ENCODE measurements at regions of chr7 and their contacts with region 1.

Region 1: DNA sequence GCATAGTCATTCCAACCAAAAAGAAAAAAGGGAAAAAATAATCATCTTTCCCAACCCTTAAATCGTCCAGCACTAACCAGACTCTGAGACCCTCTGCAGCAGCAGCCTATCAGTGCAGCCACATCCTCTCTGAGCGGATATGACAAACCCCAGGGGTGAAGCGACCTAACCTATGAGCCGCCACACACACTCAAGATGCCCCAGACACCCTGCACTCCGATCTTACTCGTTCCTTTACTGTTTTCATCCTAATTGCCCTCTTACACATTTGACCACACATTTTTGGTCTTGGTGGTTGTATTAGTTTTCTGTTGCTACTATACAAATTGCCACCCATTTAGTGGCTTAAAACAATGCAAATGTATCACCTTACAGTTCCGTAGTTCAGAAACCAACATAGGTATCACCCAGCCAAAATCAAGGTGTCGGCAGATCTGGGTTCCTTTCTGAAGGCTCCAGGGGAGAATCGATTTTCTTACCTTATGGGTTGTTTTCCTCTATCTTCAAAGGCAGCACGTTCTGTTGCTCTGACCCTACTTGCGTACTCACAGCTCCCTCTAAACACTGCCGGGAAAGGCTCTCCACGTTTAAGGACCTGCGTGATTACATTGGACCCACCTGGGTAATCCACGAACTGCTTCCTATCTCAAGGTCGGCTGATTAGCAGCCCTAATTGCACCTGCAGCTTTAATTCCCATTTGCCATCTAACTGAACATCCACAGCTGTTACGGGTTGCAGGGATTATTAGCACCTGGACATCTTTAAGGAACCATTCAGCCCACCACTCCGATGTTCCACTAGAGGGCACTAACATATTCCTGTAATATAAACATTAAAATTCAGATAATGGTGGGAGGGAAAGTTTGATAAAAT is 37.3 kb upstream of the PRSS1 start:
- DNase-seq: no peak
- ATAC-seq: peak; percentile 77
- H3K4me3 ChIP-seq: no peak overlapping the region
- H3K27ac ChIP-seq: no peak overlapping the region
- H3K4me1 ChIP-seq: no peaks in the 10 kb centered on the region
- H3K27me3 ChIP-seq: no peaks in the 10 kb centered on the region
- CTCF ChIP-seq: peak; percentile 57 to 70 (median 59)
- EP300 ChIP-seq: no peak
- POLR2A ChIP-seq: no peak
- RAD21 ChIP-seq: peak; percentile 66

Region 2: GRCh38 chr7:142400042-142400533 is 311.9 kb before region 1 on chr7:
- CTCF ChIA-PET with region 1: no interaction called
- POLR2A ChIA-PET with region 1: no interaction called
- RAD21 ChIA-PET with region 1: no interaction called
- SMC1A ChIA-PET with region 1: no interaction called
- in situ Hi-C with region 1: no loop called
- intact Hi-C with region 1: no loop called
- DNase-seq: no peak
- ATAC-seq: no peak
- H3K4me3 ChIP-seq: no peak overlapping the region
- H3K27ac ChIP-seq: no peak overlapping the region
- H3K4me1 ChIP-seq: no peaks in the 10 kb centered on the region
- H3K27me3 ChIP-seq: peaks cover 0 to 3% of the 10 kb centered on the region in 2 experiments; a peak in 2 of 4 replicates
- CTCF ChIP-seq: no peak
- EP300 ChIP-seq: no peak
- POLR2A ChIP-seq: no peak
- RAD21 ChIP-seq: no peak

Region 3: GRCh38 chr7:142632291-142633134 is 79.5 kb before region 1 on chr7:
- CTCF ChIA-PET with region 1: interaction called, 28 read pairs
- POLR2A ChIA-PET with region 1: no interaction called
- RAD21 ChIA-PET with region 1: interaction called, 6 read pairs
- SMC1A ChIA-PET with region 1: interaction called, 7 read pairs
- in situ Hi-C with region 1: no loop called
- intact Hi-C with region 1: loop called (anchors 2 kb)
- DNase-seq: peak; percentile 32
- ATAC-seq: peak; percentile 100
- H3K4me3 ChIP-seq: no peak overlapping the region
- H3K27ac ChIP-seq: no peak overlapping the region
- H3K4me1 ChIP-seq: no peaks in the 10 kb centered on the region
- H3K27me3 ChIP-seq: peaks cover 0 to 1% of the 10 kb centered on the region in 2 experiments; a peak in 1 of 4 replicates
- CTCF ChIP-seq: peak; percentile 73 to 86 (median 82)
- EP300 ChIP-seq: no peak
- POLR2A ChIP-seq: no peak
- RAD21 ChIP-seq: peak; percentile 81

Region 4: GRCh38 chr7:142689439-142690120 is 22.4 kb before region 1 on chr7:
- CTCF ChIA-PET with region 1: interaction called, 16 read pairs
- POLR2A ChIA-PET with region 1: no interaction called
- RAD21 ChIA-PET with region 1: interaction called, 4 read pairs
- SMC1A ChIA-PET with region 1: interaction called, 14 read pairs
- in situ Hi-C with region 1: no loop called
- intact Hi-C with region 1: no loop called
- DNase-seq: no peak
- ATAC-seq: peak; percentile 38
- H3K4me3 ChIP-seq: no peak overlapping the region
- H3K27ac ChIP-seq: no peak overlapping the region
- H3K4me1 ChIP-seq: peaks cover 3% of the 10 kb centered on the region; the same call in 1 of the 2 replicates
- H3K27me3 ChIP-seq: no peaks in the 10 kb centered on the region
- CTCF ChIP-seq: peak in 2 of 3 experiments; percentile 5 to 22; a peak in 1 of 6 replicates
- EP300 ChIP-seq: no peak
- POLR2A ChIP-seq: no peak
- RAD21 ChIP-seq: peak; percentile 24; the same call in 1 of the 2 replicates

Region 5: DNA sequence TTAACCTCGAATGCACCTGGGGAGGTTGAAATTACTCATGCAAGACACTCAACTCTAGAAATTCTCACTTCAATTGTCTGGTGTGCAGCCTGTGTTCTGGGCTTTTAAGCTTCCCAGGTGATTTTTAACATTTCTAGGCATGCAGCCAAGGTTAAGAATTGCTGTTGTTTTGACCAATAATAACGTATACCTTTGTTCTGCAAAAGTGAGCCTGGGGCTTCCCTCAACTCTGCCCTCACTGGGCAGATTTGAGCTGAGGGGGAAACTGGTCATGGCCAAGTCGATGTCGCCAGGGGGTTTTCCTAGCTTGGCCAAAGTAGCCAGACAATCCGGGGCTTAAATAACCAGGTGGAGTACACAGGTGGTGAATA is 59.4 kb after region 1 on chr7:
- CTCF ChIA-PET with region 1: interaction called, 286 read pairs
- POLR2A ChIA-PET with region 1: no interaction called
- RAD21 ChIA-PET with region 1: interaction called, 31 read pairs
- SMC1A ChIA-PET with region 1: interaction called, 44 read pairs
- in situ Hi-C with region 1: no loop called
- intact Hi-C with region 1: no loop called
- DNase-seq: peak; percentile 73
- ATAC-seq: peak; percentile 89
- H3K4me3 ChIP-seq: no peak overlapping the region
- H3K27ac ChIP-seq: no peak overlapping the region
- H3K4me1 ChIP-seq: peaks cover 19% of the 10 kb centered on the region
- H3K27me3 ChIP-seq: no peaks in the 10 kb centered on the region
- CTCF ChIP-seq: no peak
- EP300 ChIP-seq: peak; percentile 43 to 51; a peak in 2 of 4 replicates
- POLR2A ChIP-seq: no peak
- RAD21 ChIP-seq: no peak

Region 6: DNA sequence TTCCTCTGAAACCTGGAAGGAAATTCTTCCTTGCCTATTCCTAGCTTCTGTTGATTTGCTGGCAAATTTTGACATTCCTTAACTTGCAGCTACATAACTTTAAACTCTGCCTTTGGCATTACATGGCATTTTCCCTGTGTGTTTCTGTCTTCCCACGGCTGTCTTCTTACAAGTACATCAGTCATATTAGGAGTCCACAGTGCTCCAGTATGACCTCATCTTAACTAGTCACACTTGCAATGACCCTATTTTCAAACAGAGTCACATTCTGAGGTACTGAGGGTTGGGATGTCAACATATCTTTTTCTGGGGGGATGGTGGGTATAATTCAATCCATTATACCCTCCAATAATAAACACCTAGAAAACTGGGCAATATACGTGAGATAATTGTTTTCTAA is 105.5 kb after region 1 on chr7:
- CTCF ChIA-PET with region 1: interaction called, 277 read pairs
- POLR2A ChIA-PET with region 1: interaction called, 4 read pairs
- RAD21 ChIA-PET with region 1: interaction called, 113 read pairs
- SMC1A ChIA-PET with region 1: interaction called, 205 read pairs
- in situ Hi-C with region 1: no loop called
- intact Hi-C with region 1: no loop called
- DNase-seq: no peak
- ATAC-seq: no peak
- H3K4me3 ChIP-seq: no peak overlapping the region
- H3K27ac ChIP-seq: no peak overlapping the region
- H3K4me1 ChIP-seq: no peaks in the 10 kb centered on the region
- H3K27me3 ChIP-seq: no peaks in the 10 kb centered on the region
- CTCF ChIP-seq: no peak
- EP300 ChIP-seq: no peak
- POLR2A ChIP-seq: no peak
- RAD21 ChIP-seq: no peak